ENCODE measurements at regions of chr1 and their contacts with region 1.

Region 1: GRCh38 chr1:202170726-202171125 is 10.3 kb upstream of the PTPN7 start:
- DNase-seq: no peak
- ATAC-seq: peak; percentile 48
- H3K4me3 Mint-ChIP-seq: no peak overlapping the region
- H3K27ac Mint-ChIP-seq: no peak overlapping the region
- H3K4me1 Mint-ChIP-seq: peaks cover 10% of the 10 kb centered on the region
- H3K27me3 Mint-ChIP-seq: no peaks in the 10 kb centered on the region

Region 2: DNA sequence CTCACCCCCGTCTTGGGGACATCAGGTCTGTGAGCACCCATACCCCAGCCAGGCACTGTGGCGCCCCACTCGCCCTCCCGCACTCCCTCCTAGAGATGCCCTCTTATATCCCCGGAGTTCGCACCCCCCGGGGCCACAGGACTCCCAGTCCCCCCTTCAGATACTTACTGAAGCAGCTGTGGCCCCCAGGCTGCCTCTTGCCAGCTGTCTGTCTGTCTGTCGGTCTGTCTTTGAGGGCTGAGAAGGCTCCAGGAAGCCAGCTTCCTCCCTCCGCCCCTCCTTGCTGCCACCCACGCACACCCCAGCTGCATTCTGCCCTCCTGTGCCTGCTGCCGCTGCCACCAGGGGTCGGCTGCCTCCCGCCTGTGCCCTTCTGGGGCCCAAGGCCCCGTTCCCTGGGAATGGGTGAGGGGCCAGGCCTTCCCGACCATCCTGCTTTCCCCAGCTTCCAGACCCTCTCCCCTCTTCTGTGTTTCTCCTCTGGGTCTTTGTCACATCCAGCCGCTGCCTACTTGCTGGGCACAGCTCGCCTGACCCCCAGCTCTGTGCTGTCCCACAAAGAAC is 10.3 kb before region 1 on chr1 and contains the start of gene PTPN7:
- POLR2A ChIA-PET with region 1: interaction called, 10 read pairs
- DNase-seq: peak; percentile 72
- ATAC-seq: peak; percentile 37
- H3K4me3 Mint-ChIP-seq: peak within 1 kb of the TSS; percentile 96
- H3K27ac Mint-ChIP-seq: peak within 1 kb of the TSS; percentile 100
- H3K4me1 Mint-ChIP-seq: peaks cover 59% of the 10 kb centered on the region
- H3K27me3 Mint-ChIP-seq: no peaks in the 10 kb centered on the region
- total RNA-seq, gene PTPN7: 172 to 181 TPM

Measured in activated naive CD8-positive, alpha-beta T cell treated with anti-CD3 and anti-CD28 coated beads, Interleukin-2, amount 10 ng/mL, durations not matched to agents 7 days and 5 days (primary cell).